ENCODE measurements at regions of chr7 and their contacts with region 1.

Region 1: DNA sequence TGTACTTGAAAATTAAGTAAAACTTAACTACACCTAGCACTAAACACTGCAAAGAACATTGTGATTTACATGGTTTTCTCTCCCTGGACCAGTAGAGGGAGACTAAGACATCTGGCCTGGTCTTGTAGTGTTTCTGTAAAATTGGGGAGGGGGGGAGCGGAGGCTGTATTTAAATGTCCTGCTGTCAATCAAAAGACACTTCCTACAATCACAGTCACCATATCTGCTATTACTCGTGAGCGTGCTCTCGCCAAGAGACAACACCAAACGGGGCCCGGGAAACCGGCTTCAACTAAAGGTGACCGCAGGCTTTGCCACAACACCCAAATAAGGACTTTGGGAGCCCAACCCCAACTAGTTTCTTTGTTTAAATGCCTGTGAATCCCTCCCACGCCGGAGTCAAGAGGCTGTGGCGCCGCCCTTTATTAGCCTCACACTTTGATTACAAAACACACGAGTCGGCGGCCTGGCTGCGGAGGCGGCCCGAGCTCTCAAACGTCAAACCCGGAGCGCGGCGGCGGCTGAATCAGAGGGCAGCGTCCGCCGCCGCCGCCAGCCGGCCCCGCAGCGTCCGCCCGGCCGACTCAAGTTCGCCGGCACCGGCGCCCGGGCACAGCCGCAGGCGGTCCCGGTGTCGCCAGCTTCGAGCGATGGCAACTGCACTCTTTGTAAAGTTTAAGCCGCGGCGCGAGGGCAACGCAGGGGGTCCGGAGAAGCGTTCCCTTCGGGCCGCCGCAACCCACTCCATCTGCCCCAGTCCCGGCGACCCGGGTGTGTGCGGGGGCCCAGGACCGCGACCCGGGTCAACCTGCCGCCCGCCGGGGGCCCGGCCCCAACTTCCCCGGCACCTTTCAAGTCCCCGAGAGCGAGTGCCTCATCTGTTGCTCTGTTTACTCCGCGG is 1.3 kb downstream of the KDM7A start:
- DNase-seq: peak; percentile 97
- H3K4me3 ChIP-seq: peak overlapping the region; percentile 77 to 86 (median 77)
- H3K27ac ChIP-seq: peak overlapping the region; percentile 74
- H3K4me1 ChIP-seq: peaks cover 9% of the 10 kb centered on the region
- H3K27me3 ChIP-seq: no peaks in the 10 kb centered on the region
- CTCF ChIP-seq: peak; percentile 70 to 90

Region 2: GRCh38 chr7:139359366-139360209 is 815.9 kb before region 1 on chr7 and contains the start of gene LUC7L2:
- CTCF ChIA-PET with region 1: no interaction called
- dilution Hi-C with region 1: no loop called
- in situ Hi-C with region 1: no loop called
- intact Hi-C with region 1: loop called (anchors 10 kb)
- DNase-seq: peak; percentile 98
- H3K4me3 ChIP-seq: peak within 1 kb of the TSS; percentile 93 to 100 (median 99)
- H3K27ac ChIP-seq: peak within 1 kb of the TSS; percentile 92
- H3K4me1 ChIP-seq: peaks cover 16% of the 10 kb centered on the region
- H3K27me3 ChIP-seq: no peaks in the 10 kb centered on the region
- CTCF ChIP-seq: peak in 1 of 2 donors; percentile 1
- total RNA-seq, gene LUC7L2: 44.0 to 110 TPM

Region 3: DNA sequence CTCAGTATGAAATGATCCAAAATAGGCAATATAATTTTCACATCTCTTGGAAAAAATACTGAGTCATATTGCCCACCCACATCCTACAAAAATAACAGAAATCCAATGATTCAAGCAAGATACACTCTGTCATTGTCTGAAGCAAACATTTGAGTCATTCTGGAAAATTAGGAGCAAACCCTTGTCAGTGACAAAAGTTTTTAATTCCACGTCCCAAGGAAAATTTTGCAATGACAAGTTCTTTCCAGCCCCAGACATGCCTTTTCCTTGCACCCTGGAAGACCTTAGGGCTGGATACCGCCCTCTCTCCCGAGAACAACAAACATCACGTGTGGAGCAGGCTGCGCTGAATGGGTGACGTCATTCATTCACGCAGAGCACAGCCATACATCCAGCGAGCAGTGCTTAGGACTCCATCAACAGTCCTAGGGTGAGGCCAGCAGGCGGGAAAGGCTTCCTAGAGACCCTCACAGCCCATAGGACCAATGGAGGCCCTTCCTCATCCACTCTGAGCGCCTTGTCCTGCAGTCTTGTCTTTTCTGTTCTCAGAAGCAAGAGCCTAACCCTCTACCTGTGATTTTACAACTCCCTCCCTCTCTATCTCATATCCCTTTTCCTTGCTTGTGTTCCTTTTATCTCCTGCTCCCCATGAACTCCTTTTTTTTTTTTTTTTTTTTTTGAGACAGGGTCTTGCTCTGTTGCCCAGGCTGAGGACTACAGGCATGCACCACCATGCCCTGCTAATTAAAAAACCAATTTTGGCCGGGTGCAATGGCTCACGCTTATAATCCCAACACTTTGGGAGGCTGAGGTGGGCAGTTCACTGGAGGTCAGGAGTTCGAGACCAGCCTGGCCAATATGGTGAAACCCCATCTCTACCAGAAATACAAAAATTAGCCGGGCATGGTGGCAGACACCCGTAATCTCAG is 24.9 kb after region 1 on chr7:
- CTCF ChIA-PET with region 1: no interaction called
- dilution Hi-C with region 1: no loop called
- in situ Hi-C with region 1: no loop called
- intact Hi-C with region 1: no loop called
- DNase-seq: peak; percentile 71
- H3K4me3 ChIP-seq: no peak overlapping the region
- H3K27ac ChIP-seq: peak overlapping the region; percentile 5
- H3K4me1 ChIP-seq: peaks cover 18% of the 10 kb centered on the region
- H3K27me3 ChIP-seq: no peaks in the 10 kb centered on the region
- CTCF ChIP-seq: no peak

Region 4: DNA sequence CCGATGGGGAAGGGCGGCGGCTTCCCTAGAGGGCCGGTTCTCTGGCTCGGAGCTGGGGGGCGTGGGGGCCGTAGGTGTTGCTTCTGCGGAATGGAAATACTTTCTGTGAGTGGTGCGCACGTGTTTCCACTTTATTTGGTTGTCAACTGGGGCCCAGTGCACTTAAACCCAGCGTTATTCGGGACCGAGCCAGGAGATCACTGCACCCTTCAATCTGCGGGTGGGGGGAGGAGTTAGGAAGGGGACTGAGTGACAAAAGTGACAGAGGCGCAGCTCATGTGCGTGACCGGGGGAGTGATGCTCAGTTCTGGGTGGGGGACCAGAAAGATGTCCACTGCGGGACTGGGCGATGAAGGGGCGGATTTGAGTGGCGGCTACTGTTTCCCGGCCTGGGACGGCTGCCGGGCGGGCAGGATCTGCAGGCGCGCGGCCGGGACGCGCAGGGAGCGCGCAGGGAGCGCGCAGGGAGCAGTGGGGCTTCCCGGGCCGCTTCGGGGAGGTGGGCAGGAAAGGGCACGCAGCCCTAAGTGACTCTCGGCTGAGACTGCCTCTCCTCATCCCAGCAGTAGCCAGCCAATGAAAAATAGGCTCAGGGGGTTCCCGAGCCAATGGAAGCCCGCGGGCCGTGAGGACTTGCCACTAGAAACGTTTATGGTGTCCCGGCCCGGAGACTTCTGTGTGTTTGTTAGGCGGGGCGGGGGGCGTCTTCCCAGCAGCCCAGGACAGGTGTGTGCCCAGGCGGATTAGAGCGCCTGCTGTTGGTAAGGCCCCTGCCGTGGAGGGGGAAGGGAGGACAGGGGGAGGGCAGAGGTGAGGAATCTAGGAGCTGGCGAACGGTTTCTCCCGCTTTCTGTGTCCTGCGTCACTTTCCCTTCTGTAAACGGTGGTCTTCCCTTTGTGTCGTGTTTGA is 55.6 kb after region 1 on chr7:
- CTCF ChIA-PET with region 1: no interaction called
- dilution Hi-C with region 1: no loop called
- in situ Hi-C with region 1: no loop called
- intact Hi-C with region 1: loop called (anchors 5 kb)
- DNase-seq: peak; percentile 16
- H3K4me3 ChIP-seq: peak overlapping the region; percentile 58 to 62 (median 61)
- H3K27ac ChIP-seq: no peak overlapping the region
- H3K4me1 ChIP-seq: peaks cover 15% of the 10 kb centered on the region
- H3K27me3 ChIP-seq: peaks cover 6% of the 10 kb centered on the region
- CTCF ChIP-seq: no peak

Region 5: GRCh38 chr7:140316165-140316661 is 140.7 kb after region 1 on chr7:
- CTCF ChIA-PET with region 1: no interaction called
- dilution Hi-C with region 1: no loop called
- in situ Hi-C with region 1: loop called in 1 of 2 experiments (anchors 25 kb)
- intact Hi-C with region 1: loop called (anchors 2 kb)
- DNase-seq: peak; percentile 96
- H3K4me3 ChIP-seq: peak overlapping the region; percentile 14 to 39 (median 27)
- H3K27ac ChIP-seq: peak overlapping the region; percentile 95
- H3K4me1 ChIP-seq: peaks cover 25% of the 10 kb centered on the region
- H3K27me3 ChIP-seq: no peaks in the 10 kb centered on the region
- CTCF ChIP-seq: no peak

Region 6: GRCh38 chr7:140479062-140479738 is 303.7 kb after region 1 on chr7 and contains the start of gene MKRN1:
- CTCF ChIA-PET with region 1: no interaction called
- dilution Hi-C with region 1: no loop called
- in situ Hi-C with region 1: no loop called
- intact Hi-C with region 1: loop called (anchors 5 kb)
- DNase-seq: peak; percentile 95
- H3K4me3 ChIP-seq: peak within 1 kb of the TSS; percentile 60 to 93 (median 90)
- H3K27ac ChIP-seq: peak within 1 kb of the TSS; percentile 74
- H3K4me1 ChIP-seq: peaks cover 6% of the 10 kb centered on the region
- H3K27me3 ChIP-seq: no peaks in the 10 kb centered on the region
- CTCF ChIP-seq: no peak
- total RNA-seq, gene MKRN1: 48.2 to 69.6 TPM